ENCODE measurements at regions of chr6 and their contacts with region 1.

Region 1: DNA sequence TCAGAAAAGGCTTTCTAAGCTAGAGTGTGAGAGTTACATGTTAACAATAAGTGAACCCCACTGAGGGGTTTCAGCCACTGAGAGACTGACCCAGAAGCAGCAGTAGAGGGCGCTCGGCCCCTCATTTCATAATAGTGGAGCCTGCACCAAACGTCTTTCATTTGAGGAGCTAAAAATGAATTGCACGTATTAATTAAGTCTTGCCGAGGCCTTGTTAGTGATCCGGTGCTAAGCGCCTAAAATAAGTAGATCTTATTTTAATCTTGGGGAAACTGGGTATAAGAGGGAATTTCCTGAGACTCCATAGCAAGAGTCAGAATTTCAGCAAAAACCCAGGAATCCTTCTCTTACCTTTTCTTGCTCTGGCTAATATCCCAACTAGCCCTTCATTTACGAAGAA is 209.7 kb downstream of the FARS2 start:
- DNase-seq: peak; percentile 67
- ATAC-seq: peak; percentile 71
- H3K4me3 ChIP-seq: no peak overlapping the region
- H3K4me3 Mint-ChIP-seq: no peak overlapping the region
- H3K27ac ChIP-seq: no peak overlapping the region
- H3K27ac Mint-ChIP-seq: no peak overlapping the region
- H3K4me1 ChIP-seq: peaks cover 3 to 4% of the 10 kb centered on the region in 2 donors
- H3K4me1 Mint-ChIP-seq: no peaks in the 10 kb centered on the region
- H3K27me3 ChIP-seq: no peaks in the 10 kb centered on the region
- H3K27me3 Mint-ChIP-seq: no peaks in the 10 kb centered on the region
- CTCF ChIP-seq: peak; percentile 91

Region 2: DNA sequence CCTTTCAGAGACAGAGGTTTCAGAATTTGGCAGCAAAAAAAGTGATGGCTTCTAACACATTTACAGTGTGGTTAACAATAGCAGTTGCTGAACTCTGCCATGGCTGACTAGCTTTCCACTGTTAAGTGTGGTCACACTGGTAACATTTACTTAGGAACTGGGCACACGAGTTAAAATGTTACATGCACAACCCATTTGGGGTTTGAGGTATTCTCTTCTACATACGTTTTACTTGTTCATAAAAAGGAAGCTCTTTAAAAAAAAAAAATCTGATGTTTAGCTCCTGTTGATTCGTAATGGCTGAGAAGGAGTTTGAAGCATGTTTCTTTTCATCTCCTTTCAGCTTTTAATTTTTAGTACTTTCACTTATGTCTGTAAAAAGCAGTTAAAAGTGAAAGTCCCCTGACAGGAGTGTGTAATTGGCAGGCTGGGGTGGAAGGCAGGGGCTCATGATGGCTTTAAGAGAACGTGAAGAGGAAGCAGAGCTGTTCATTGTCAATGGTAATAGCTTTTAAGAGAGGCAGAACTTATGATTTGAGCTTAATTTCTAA is 36.2 kb after region 1 on chr6:
- CTCF ChIA-PET with region 1: interaction called, 12 read pairs
- POLR2A ChIA-PET with region 1: no interaction called
- intact Hi-C with region 1: no loop called
- DNase-seq: peak; percentile 46
- ATAC-seq: peak; percentile 72
- H3K4me3 ChIP-seq: peak overlapping the region in 3 of 5 experiments; percentile 21 to 55 (median 33)
- H3K4me3 Mint-ChIP-seq: peak overlapping the region; percentile 76
- H3K27ac ChIP-seq: peak overlapping the region; percentile 33 to 89
- H3K27ac Mint-ChIP-seq: peak overlapping the region; percentile 89
- H3K4me1 ChIP-seq: peaks cover 29 to 31% of the 10 kb centered on the region in 2 donors
- H3K4me1 Mint-ChIP-seq: peaks cover 38% of the 10 kb centered on the region
- H3K27me3 ChIP-seq: no peaks in the 10 kb centered on the region
- H3K27me3 Mint-ChIP-seq: no peaks in the 10 kb centered on the region
- CTCF ChIP-seq: no peak

Region 3: GRCh38 chr6:5541751-5542432 is 70.8 kb after region 1 on chr6:
- CTCF ChIA-PET with region 1: no interaction called
- POLR2A ChIA-PET with region 1: no interaction called
- intact Hi-C with region 1: no loop called
- DNase-seq: no peak
- ATAC-seq: no peak
- H3K4me3 ChIP-seq: no peak overlapping the region
- H3K4me3 Mint-ChIP-seq: no peak overlapping the region
- H3K27ac ChIP-seq: no peak overlapping the region
- H3K27ac Mint-ChIP-seq: no peak overlapping the region
- H3K4me1 ChIP-seq: no peaks in the 10 kb centered on the region
- H3K4me1 Mint-ChIP-seq: no peaks in the 10 kb centered on the region
- H3K27me3 ChIP-seq: no peaks in the 10 kb centered on the region
- H3K27me3 Mint-ChIP-seq: no peaks in the 10 kb centered on the region
- CTCF ChIP-seq: no peak

Region 4: DNA sequence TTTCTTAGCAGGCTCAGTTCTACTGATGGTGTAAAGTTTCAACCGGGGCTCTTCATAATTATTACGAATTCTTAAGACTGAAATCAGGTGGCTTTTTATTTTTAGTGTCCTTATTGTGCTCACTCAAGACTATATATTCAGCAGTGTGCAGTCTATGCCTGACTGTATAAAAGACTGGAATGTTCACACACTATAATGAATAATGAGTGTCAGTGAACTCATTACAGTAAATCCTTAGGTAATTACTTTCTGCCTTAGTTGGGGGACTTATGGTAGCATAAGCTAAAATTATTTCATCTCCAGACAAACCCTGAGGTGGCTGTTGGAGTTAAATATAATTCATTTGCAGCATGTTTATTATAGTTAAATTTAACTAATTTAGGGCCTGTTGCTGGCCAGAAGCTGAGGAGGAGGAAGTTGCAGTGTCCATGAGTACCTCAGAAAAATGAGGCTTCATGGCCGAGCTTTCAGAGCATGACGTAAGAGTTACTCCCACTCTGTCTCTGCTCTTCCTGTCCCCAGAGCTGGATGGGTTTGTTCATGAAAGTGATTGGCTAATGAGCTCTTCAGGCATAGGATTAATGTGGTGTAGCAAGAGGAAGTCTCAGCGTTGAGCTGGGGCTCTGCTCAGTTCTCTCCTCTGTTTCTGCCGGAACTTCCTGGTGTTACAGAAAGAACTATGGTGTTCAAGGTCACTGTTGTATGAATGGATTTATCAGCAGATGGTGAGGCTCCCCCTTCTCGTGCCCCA is 199.9 kb after region 1 on chr6:
- CTCF ChIA-PET with region 1: no interaction called
- POLR2A ChIA-PET with region 1: no interaction called
- intact Hi-C with region 1: no loop called
- DNase-seq: peak; percentile 48
- ATAC-seq: peak; percentile 57
- H3K4me3 ChIP-seq: no peak overlapping the region
- H3K4me3 Mint-ChIP-seq: peak overlapping the region; percentile 1
- H3K27ac ChIP-seq: peak overlapping the region in 1 of 2 donors; percentile 28
- H3K27ac Mint-ChIP-seq: peak overlapping the region; percentile 72
- H3K4me1 ChIP-seq: peaks cover 16 to 26% of the 10 kb centered on the region in 2 donors
- H3K4me1 Mint-ChIP-seq: peaks cover 37% of the 10 kb centered on the region
- H3K27me3 ChIP-seq: no peaks in the 10 kb centered on the region
- H3K27me3 Mint-ChIP-seq: no peaks in the 10 kb centered on the region
- CTCF ChIP-seq: no peak

Region 5: DNA sequence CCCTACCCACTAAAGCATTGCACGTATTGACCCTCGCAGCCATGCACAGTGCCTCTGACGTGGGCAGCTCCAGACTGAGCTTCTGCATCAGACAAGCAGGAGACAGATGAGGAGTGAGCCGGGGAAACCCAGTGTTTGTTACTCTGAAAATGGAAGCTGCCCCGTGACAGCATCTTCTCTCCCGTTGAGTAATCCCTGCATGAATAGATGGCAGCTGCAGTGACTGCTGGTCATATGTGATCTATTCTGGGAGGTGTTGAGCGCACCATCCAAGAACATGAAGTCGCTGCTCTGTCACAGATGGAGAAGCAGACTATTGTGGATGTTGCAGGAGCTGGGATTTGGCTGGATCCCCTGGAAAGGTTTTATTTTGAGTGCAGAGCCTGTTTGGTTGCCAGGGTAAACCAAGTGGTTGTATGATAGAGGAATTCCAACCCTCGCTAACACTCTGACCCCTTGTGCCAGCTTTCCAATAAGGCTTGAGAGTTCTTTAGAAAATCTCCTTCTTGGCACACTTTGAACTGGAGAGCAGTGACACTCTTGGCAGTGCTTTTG is 293.4 kb after region 1 on chr6:
- CTCF ChIA-PET with region 1: interaction called, 10 read pairs
- POLR2A ChIA-PET with region 1: no interaction called
- intact Hi-C with region 1: loop called (anchors 10 kb)
- DNase-seq: no peak
- ATAC-seq: peak; percentile 39
- H3K4me3 ChIP-seq: no peak overlapping the region
- H3K4me3 Mint-ChIP-seq: peak overlapping the region; percentile 44
- H3K27ac ChIP-seq: no peak overlapping the region
- H3K27ac Mint-ChIP-seq: peak overlapping the region; percentile 88
- H3K4me1 ChIP-seq: peaks cover 18 to 21% of the 10 kb centered on the region in 2 donors
- H3K4me1 Mint-ChIP-seq: peaks cover 39% of the 10 kb centered on the region
- H3K27me3 ChIP-seq: no peaks in the 10 kb centered on the region
- H3K27me3 Mint-ChIP-seq: no peaks in the 10 kb centered on the region
- CTCF ChIP-seq: no peak

Region 6: GRCh38 chr6:5892669-5893068 is 421.6 kb after region 1 on chr6:
- CTCF ChIA-PET with region 1: interaction called, 12 read pairs
- POLR2A ChIA-PET with region 1: interaction called, 3 read pairs
- intact Hi-C with region 1: no loop called
- DNase-seq: no peak
- ATAC-seq: no peak
- H3K4me3 ChIP-seq: peak overlapping the region in 4 of 5 experiments; percentile 10 to 51 (median 48)
- H3K4me3 Mint-ChIP-seq: peak overlapping the region; percentile 92
- H3K27ac ChIP-seq: peak overlapping the region; percentile 51 to 79
- H3K27ac Mint-ChIP-seq: peak overlapping the region; percentile 97
- H3K4me1 ChIP-seq: peaks cover 7% of the 10 kb centered on the region in 2 donors
- H3K4me1 Mint-ChIP-seq: peaks cover 5% of the 10 kb centered on the region
- H3K27me3 ChIP-seq: peaks cover 0 to 9% (median 0%) of the 10 kb centered on the region in 4 experiments
- H3K27me3 Mint-ChIP-seq: peaks cover 6% of the 10 kb centered on the region
- CTCF ChIP-seq: no peak

Region 7: DNA sequence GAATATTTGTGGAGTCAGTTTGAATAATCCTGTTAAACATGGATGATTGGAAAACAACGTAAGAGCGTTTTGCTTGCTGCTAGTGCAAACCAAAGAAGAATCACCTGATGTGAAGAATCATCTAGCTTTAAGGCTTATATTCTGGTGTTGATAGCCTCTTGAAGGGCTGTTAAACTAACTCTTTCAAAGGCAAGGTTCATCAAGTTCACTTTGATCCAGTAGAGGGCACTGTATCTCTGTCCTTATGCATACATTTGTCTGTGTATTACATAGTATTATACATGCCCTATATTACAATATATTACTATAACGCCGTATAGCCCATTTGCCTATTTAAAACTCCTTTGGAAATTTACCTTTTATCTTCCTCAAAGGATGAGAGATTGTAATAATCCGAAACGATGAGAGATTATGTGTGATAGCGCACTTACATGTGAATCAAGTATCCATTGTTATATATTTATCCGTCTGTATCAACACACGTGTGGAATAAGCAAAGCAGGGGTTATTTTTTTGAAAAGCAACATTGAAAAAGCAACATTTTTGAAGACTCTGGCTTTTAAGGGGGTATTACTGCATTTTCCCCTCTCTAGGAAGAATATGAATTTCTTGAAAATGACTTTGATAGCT is 586.5 kb after region 1 on chr6:
- CTCF ChIA-PET with region 1: interaction called, 10 read pairs
- POLR2A ChIA-PET with region 1: no interaction called
- intact Hi-C with region 1: no loop called
- DNase-seq: peak; percentile 72
- ATAC-seq: peak; percentile 67
- H3K4me3 ChIP-seq: no peak overlapping the region
- H3K4me3 Mint-ChIP-seq: no peak overlapping the region
- H3K27ac ChIP-seq: no peak overlapping the region
- H3K27ac Mint-ChIP-seq: no peak overlapping the region
- H3K4me1 ChIP-seq: no peaks in the 10 kb centered on the region
- H3K4me1 Mint-ChIP-seq: no peaks in the 10 kb centered on the region
- H3K27me3 ChIP-seq: peaks cover 0 to 18% (median 13%) of the 10 kb centered on the region in 4 experiments
- H3K27me3 Mint-ChIP-seq: peaks cover 65% of the 10 kb centered on the region
- CTCF ChIP-seq: peak; percentile 77